ENCODE measurements at regions of chr10 and their contacts with region 1.

Region 1: GRCh38 chr10:974785-975074 is 13.5 kb upstream of the GTPBP4 start:
- DNase-seq: no peak
- H3K4me3 ChIP-seq: no peak overlapping the region
- H3K27ac ChIP-seq: no peak overlapping the region
- H3K4me1 ChIP-seq: peaks cover 6% of the 10 kb centered on the region
- H3K27me3 ChIP-seq: no peaks in the 10 kb centered on the region
- CTCF ChIP-seq: no peak
- EP300 ChIP-seq: no peak
- POLR2A ChIP-seq: no peak

Region 2: DNA sequence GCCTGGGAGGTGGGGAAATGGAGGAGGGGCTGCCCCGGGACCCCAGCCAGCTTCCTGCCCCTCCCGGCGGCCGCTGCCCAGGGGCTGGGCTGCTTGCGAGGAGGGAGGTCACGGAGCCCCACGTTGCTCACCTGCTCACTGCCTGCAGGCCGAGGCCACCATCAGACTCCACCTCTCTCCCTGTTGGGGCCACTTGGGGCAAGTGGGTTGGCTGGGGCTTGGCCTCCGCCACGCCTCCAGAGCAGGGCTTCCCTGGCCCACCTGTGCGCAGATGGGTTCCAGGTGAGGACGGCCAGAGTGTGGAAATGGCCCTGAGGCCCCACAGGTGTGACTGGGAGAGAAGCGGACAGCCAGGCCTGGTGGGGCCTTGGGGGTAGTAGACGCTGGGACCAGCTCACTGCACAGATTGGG is 202.5 kb before region 1 on chr10:
- intact Hi-C with region 1: no loop called
- DNase-seq: no peak
- H3K4me3 ChIP-seq: no peak overlapping the region
- H3K27ac ChIP-seq: no peak overlapping the region
- H3K4me1 ChIP-seq: no peaks in the 10 kb centered on the region
- H3K27me3 ChIP-seq: no peaks in the 10 kb centered on the region
- CTCF ChIP-seq: no peak
- EP300 ChIP-seq: no peak
- POLR2A ChIP-seq: no peak

Region 3: GRCh38 chr10:909831-910230 is 64.9 kb before region 1 on chr10:
- intact Hi-C with region 1: loop called in 1 of 4 experiments (anchors 5 kb)
- DNase-seq: no peak
- H3K4me3 ChIP-seq: no peak overlapping the region
- H3K27ac ChIP-seq: no peak overlapping the region
- H3K4me1 ChIP-seq: peaks cover 9% of the 10 kb centered on the region
- H3K27me3 ChIP-seq: no peaks in the 10 kb centered on the region
- CTCF ChIP-seq: no peak
- EP300 ChIP-seq: no peak
- POLR2A ChIP-seq: no peak

Measured in ovary (tissue), 10 donors.